Left colon (tissue), 2 donors: ENCODE measurements at regions of chr15 and their contacts with region 1.

Region 1: GRCh38 chr15:70679919-70680231 is 83.5 kb downstream of the UACA start:
- DNase-seq: no peak
- ATAC-seq: no peak

Region 2: GRCh38 chr15:70810916-70811578 is 131.2 kb after region 1 on chr15:
- intact Hi-C with region 1: loop called in 1 of 2 experiments (anchors 5 kb)
- DNase-seq: no peak
- ATAC-seq: no peak